IMR-90 (cell line): ENCODE measurements at regions of chr1 and their contacts with region 1.

Region 1: DNA sequence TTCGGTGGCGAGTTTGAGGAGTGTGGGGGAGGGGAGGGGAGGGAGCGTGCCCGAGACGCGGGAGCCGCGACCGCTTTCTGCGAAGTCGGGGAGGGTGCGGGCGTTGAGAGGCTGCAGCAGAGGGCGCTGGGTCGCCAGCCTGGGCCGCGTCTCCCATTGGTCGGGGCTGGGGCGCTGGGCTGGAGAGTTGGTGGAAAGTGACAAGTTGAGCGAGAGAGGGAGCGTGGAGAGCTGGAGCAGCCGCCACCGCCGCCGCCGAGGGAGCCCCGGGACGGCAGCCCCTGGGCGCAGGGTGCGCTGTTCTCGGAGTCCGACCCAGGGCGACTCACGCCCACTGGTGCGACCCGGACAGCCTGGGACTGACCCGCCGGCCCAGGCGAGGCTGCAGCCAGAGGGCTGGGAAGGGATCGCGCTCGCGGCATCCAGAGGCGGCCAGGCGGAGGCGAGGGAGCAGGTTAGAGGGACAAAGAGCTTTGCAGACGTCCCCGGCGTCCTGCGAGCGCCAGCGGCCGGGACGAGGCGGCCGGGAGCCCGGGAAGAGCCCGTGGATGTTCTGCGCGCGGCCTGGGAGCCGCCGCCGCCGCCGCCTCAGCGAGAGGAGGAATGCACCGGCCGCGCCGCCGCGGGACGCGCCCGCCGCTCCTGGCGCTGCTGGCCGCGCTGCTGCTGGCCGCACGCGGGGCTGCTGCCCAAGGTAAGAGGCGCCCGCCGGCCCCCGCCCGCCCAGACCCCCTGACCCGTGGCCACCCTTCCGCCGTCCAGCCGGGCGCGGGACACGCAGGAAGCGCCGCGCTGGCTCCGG is at the start of gene ROR1:
- DNase-seq: peak; percentile 76
- ATAC-seq: peak; percentile 94
- H3K4me3 ChIP-seq: peak within 1 kb of the TSS; percentile 69
- H3K27ac ChIP-seq: peak within 1 kb of the TSS; percentile 79
- H3K4me1 ChIP-seq: peaks cover 6% of the 10 kb centered on the region
- H3K27me3 ChIP-seq: peaks cover 8% of the 10 kb centered on the region; the same call in 1 of the 2 replicates
- CTCF ChIP-seq: peak; percentile 70
- POLR2A ChIP-seq: no peak
- RAD21 ChIP-seq: peak; percentile 75
- total RNA-seq, gene ROR1: 8.1 and 10.0 TPM in 2 replicates

Region 2: GRCh38 chr1:63379583-63379982 is 394.4 kb before region 1 on chr1:
- CTCF ChIA-PET with region 1: no interaction called
- POLR2A ChIA-PET with region 1: no interaction called
- dilution Hi-C with region 1: no loop called
- in situ Hi-C with region 1: no loop called
- intact Hi-C with region 1: no loop called
- DNase-seq: no peak
- ATAC-seq: no peak
- H3K4me3 ChIP-seq: no peak overlapping the region
- H3K27ac ChIP-seq: no peak overlapping the region
- H3K4me1 ChIP-seq: no peaks in the 10 kb centered on the region
- H3K27me3 ChIP-seq: no peaks in the 10 kb centered on the region
- CTCF ChIP-seq: no peak
- POLR2A ChIP-seq: no peak
- RAD21 ChIP-seq: no peak

Region 3: GRCh38 chr1:63615768-63616420 is 158.1 kb before region 1 on chr1:
- CTCF ChIA-PET with region 1: no interaction called
- POLR2A ChIA-PET with region 1: no interaction called
- dilution Hi-C with region 1: no loop called
- in situ Hi-C with region 1: no loop called
- intact Hi-C with region 1: loop called (anchors 2 kb)
- DNase-seq: peak; percentile 75
- ATAC-seq: peak; percentile 78
- H3K4me3 ChIP-seq: no peak overlapping the region
- H3K27ac ChIP-seq: no peak overlapping the region
- H3K4me1 ChIP-seq: peaks cover 11% of the 10 kb centered on the region
- H3K27me3 ChIP-seq: no peaks in the 10 kb centered on the region
- CTCF ChIP-seq: peak; percentile 81
- POLR2A ChIP-seq: no peak
- RAD21 ChIP-seq: peak; percentile 85

Region 4: GRCh38 chr1:63691701-63692425 is 82.2 kb before region 1 on chr1:
- CTCF ChIA-PET with region 1: interaction called, 7 read pairs
- POLR2A ChIA-PET with region 1: no interaction called
- dilution Hi-C with region 1: no loop called
- in situ Hi-C with region 1: no loop called
- intact Hi-C with region 1: loop called (anchors 2 kb)
- DNase-seq: peak; percentile 94
- ATAC-seq: peak; percentile 89
- H3K4me3 ChIP-seq: no peak overlapping the region
- H3K27ac ChIP-seq: no peak overlapping the region
- H3K4me1 ChIP-seq: peaks cover 2% of the 10 kb centered on the region; the same call in 1 of the 2 replicates
- H3K27me3 ChIP-seq: no peaks in the 10 kb centered on the region; the same call in 1 of the 2 replicates
- CTCF ChIP-seq: peak; percentile 84
- POLR2A ChIP-seq: no peak
- RAD21 ChIP-seq: peak; percentile 87

Region 5: DNA sequence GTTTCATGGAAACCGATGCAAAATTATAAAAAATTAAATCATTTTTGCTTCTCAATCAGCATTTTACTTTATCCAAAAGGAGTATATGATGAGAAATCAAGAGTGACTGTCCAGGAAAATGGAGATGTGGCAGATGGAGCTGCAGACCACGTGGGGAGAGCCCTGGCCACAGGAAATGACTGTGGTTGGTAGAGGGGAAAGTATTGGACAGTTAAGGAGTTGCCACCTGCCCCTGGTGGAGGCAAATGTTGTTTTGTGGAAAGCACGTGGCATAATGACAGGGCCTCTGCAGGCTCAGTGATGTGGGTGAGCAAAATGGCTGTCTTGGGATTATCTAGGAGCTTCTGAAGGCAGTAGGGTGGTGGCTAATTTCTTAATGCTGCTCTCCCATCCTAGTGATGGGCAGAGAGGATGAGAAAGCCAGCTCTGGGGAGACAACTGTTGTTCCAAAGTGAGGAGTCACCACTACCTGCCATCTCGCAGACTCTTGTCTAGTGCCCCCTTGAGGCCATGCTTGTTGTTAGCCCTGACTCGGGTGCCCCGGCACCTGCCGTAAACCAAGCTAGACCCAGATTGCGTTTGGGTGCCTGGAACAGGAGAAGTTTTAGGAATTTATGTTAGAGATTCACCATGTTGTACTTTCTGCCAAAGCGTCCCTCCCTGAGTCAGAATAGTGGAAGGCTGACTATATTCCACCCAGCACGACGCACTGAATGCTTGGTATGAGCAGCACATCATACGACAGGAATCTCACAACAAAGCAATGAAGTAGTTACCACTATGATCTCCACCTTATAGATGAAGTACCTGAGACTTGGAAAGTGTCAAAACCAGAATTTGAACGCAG is 143.8 kb after region 1 on chr1:
- CTCF ChIA-PET with region 1: interaction called, 5 read pairs
- POLR2A ChIA-PET with region 1: no interaction called
- dilution Hi-C with region 1: no loop called
- in situ Hi-C with region 1: loop called (anchors 10 kb)
- intact Hi-C with region 1: loop called (anchors 2 kb)
- DNase-seq: peak; percentile 21
- ATAC-seq: no peak
- H3K4me3 ChIP-seq: no peak overlapping the region
- H3K27ac ChIP-seq: no peak overlapping the region
- H3K4me1 ChIP-seq: peaks cover 13% of the 10 kb centered on the region
- H3K27me3 ChIP-seq: no peaks in the 10 kb centered on the region
- CTCF ChIP-seq: peak; percentile 17; the same call in 1 of the 2 replicates
- POLR2A ChIP-seq: no peak
- RAD21 ChIP-seq: no peak

Region 6: DNA sequence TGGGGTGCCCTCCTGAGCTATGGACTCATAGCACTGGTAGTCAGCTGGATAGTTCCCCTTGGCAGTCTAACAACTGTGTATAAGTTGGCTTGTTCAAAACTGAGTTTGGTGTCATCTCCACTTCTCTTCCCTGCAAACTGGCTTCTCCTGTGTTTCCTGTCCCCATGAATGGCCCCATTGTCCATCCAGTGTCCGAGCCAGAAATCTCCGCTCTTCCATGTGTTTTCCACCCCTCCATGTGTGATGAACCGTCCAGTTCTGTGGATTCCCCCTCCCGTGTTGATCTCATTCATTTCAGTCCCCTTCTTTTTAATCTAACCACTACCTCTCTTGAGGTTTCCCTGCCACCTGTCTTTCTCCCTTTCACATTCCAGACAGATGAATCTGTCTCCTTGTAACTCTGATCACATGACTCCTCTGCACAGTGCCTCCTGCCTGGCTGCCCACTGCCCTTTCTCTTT is 195.5 kb after region 1 on chr1:
- CTCF ChIA-PET with region 1: no interaction called
- POLR2A ChIA-PET with region 1: no interaction called
- dilution Hi-C with region 1: no loop called
- in situ Hi-C with region 1: no loop called
- intact Hi-C with region 1: no loop called
- DNase-seq: peak; percentile 12
- ATAC-seq: no peak; the same call in 1 of the 2 replicates
- H3K4me3 ChIP-seq: no peak overlapping the region
- H3K27ac ChIP-seq: peak overlapping the region; percentile 54; the same call in 1 of the 2 replicates
- H3K4me1 ChIP-seq: peaks cover 10% of the 10 kb centered on the region; the same call in 1 of the 2 replicates
- H3K27me3 ChIP-seq: no peaks in the 10 kb centered on the region; the same call in 1 of the 2 replicates
- CTCF ChIP-seq: no peak
- POLR2A ChIP-seq: no peak
- RAD21 ChIP-seq: no peak

Region 7: DNA sequence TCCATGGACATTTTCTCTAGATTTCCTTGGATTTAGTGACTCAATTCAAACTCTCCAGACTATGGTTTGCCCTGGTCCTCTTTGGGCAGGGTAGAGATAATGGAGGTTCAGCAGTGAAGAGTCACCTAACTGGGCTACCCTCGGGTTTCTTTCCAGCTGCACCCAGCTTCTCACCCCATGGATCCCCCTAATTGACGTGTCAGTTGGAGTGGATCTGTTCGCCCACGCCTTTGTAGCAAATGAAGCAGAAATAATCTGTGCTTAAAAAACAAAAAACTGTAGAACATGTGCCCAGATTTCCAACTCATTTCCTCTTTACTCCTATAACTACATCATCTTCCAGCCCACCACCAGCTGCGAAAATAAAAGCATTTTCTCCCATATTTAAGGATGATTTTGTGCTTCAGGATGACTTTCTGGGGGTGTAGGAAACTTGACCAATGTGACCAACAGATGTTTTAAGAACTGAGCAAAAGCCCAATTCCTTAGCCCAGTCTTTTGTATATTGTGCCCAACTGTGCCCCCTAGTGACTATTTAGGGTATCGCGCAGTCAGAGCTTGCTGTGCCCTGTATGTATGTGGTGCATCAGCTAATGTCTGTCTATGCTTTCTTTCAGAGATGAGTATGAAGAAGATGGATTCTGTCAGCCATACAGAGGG is 362.9 kb after region 1 on chr1:
- CTCF ChIA-PET with region 1: interaction called, 6 read pairs
- POLR2A ChIA-PET with region 1: no interaction called
- dilution Hi-C with region 1: no loop called
- in situ Hi-C with region 1: loop called (anchors 10 kb)
- intact Hi-C with region 1: loop called (anchors 1 kb)
- DNase-seq: peak; percentile 94
- ATAC-seq: peak; percentile 79
- H3K4me3 ChIP-seq: no peak overlapping the region
- H3K27ac ChIP-seq: no peak overlapping the region
- H3K4me1 ChIP-seq: peaks cover 7% of the 10 kb centered on the region; the same call in 1 of the 2 replicates
- H3K27me3 ChIP-seq: no peaks in the 10 kb centered on the region
- CTCF ChIP-seq: peak; percentile 90
- POLR2A ChIP-seq: no peak
- RAD21 ChIP-seq: peak; percentile 90

Region 8: GRCh38 chr1:64163970-64164369 is 390.0 kb after region 1 on chr1:
- CTCF ChIA-PET with region 1: interaction called, 4 read pairs
- POLR2A ChIA-PET with region 1: no interaction called
- dilution Hi-C with region 1: no loop called
- in situ Hi-C with region 1: no loop called
- intact Hi-C with region 1: loop called (anchors 5 kb)
- DNase-seq: peak; percentile 64
- ATAC-seq: peak; percentile 73
- H3K4me3 ChIP-seq: no peak overlapping the region
- H3K27ac ChIP-seq: no peak overlapping the region
- H3K4me1 ChIP-seq: peaks cover 2% of the 10 kb centered on the region
- H3K27me3 ChIP-seq: no peaks in the 10 kb centered on the region
- CTCF ChIP-seq: peak; percentile 70
- POLR2A ChIP-seq: no peak
- RAD21 ChIP-seq: peak; percentile 66